Caco-2 (cell line): ENCODE measurements at regions of chr3 and their contacts with region 1.

Region 1: GRCh38 chr3:5057857-5058324 is 64.2 kb upstream of the ARL8B start:
- DNase-seq: peak; percentile 75 to 76
- H3K4me3 ChIP-seq: no peak overlapping the region
- H3K4me3 Mint-ChIP-seq: no peak overlapping the region
- H3K27ac Mint-ChIP-seq: no peak overlapping the region
- H3K4me1 ChIP-seq: no peaks in the 10 kb centered on the region
- H3K4me1 Mint-ChIP-seq: no peaks in the 10 kb centered on the region
- H3K27me3 ChIP-seq: no peaks in the 10 kb centered on the region
- H3K27me3 Mint-ChIP-seq: no peaks in the 10 kb centered on the region
- CTCF ChIP-seq: peak; percentile 68 to 69

Region 2: DNA sequence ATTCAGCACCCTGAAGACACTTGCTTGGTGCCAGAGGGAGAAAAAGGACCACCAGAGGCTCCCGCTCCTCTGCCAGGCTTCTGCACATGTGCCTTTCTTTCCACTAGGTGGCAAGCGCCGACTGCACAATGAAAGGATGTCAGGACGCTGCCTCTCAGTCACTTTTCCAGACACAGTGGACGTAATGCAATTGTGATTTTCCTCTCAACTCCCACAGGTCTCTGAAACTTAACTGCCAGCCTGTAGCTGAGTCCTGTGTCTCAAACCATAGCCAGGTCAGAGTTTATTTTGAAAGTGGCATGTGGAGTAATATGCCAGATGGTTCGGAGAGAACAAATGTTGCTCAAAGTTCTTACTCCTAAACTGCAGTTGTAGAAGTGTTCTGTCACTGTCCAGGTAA is 401.8 kb before region 1 on chr3:
- CTCF ChIA-PET with region 1: no interaction called
- POLR2A ChIA-PET with region 1: no interaction called
- intact Hi-C with region 1: loop called (anchors 1 kb)
- DNase-seq: peak; percentile 72 to 76
- H3K4me3 ChIP-seq: no peak overlapping the region
- H3K4me3 Mint-ChIP-seq: no peak overlapping the region
- H3K27ac Mint-ChIP-seq: no peak overlapping the region
- H3K4me1 ChIP-seq: no peaks in the 10 kb centered on the region
- H3K4me1 Mint-ChIP-seq: no peaks in the 10 kb centered on the region
- H3K27me3 ChIP-seq: no peaks in the 10 kb centered on the region
- H3K27me3 Mint-ChIP-seq: no peaks in the 10 kb centered on the region
- CTCF ChIP-seq: peak; percentile 87 to 96

Region 3: GRCh38 chr3:4786431-4786830 is 271.5 kb before region 1 on chr3:
- CTCF ChIA-PET with region 1: no interaction called
- POLR2A ChIA-PET with region 1: no interaction called
- intact Hi-C with region 1: loop called (anchors 10 kb)
- DNase-seq: no peak
- H3K4me3 ChIP-seq: no peak overlapping the region
- H3K4me3 Mint-ChIP-seq: no peak overlapping the region
- H3K27ac Mint-ChIP-seq: no peak overlapping the region
- H3K4me1 ChIP-seq: no peaks in the 10 kb centered on the region
- H3K4me1 Mint-ChIP-seq: no peaks in the 10 kb centered on the region
- H3K27me3 ChIP-seq: no peaks in the 10 kb centered on the region
- H3K27me3 Mint-ChIP-seq: no peaks in the 10 kb centered on the region
- CTCF ChIP-seq: no peak

Region 4: DNA sequence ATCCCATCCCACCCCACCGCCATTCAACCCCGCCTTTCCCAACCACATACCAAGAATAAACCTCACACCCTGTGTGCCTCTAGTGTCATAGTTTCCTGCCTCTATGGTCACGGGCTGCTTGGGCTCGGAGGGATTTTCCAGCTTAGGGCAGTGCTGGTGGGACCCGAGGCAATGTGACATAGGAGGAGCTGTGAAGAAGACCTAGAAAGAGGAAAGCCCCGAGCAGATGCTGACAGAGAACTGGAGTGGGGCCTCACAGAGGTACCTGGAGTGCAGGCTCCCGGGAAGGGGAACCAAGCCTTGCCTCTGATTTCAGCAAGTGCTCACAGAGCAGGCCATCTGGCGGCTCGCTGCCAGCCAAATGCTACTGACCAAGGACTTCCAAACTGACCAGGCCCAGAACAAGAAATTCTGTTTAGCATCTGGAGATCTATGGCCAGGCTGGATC is 51.1 kb before region 1 on chr3:
- CTCF ChIA-PET with region 1: no interaction called
- POLR2A ChIA-PET with region 1: no interaction called
- intact Hi-C with region 1: no loop called
- DNase-seq: no peak
- H3K4me3 ChIP-seq: no peak overlapping the region
- H3K4me3 Mint-ChIP-seq: no peak overlapping the region
- H3K27ac Mint-ChIP-seq: no peak overlapping the region
- H3K4me1 ChIP-seq: peaks cover 4% of the 10 kb centered on the region
- H3K4me1 Mint-ChIP-seq: peaks cover 7% of the 10 kb centered on the region
- H3K27me3 ChIP-seq: no peaks in the 10 kb centered on the region
- H3K27me3 Mint-ChIP-seq: no peaks in the 10 kb centered on the region
- CTCF ChIP-seq: no peak

Region 5: GRCh38 chr3:5035692-5036391 is 22.0 kb before region 1 on chr3:
- CTCF ChIA-PET with region 1: no interaction called
- POLR2A ChIA-PET with region 1: no interaction called
- intact Hi-C with region 1: no loop called
- DNase-seq: no peak
- H3K4me3 ChIP-seq: no peak overlapping the region
- H3K4me3 Mint-ChIP-seq: no peak overlapping the region
- H3K27ac Mint-ChIP-seq: no peak overlapping the region
- H3K4me1 ChIP-seq: no peaks in the 10 kb centered on the region
- H3K4me1 Mint-ChIP-seq: peaks cover 9% of the 10 kb centered on the region
- H3K27me3 ChIP-seq: no peaks in the 10 kb centered on the region
- H3K27me3 Mint-ChIP-seq: no peaks in the 10 kb centered on the region
- CTCF ChIP-seq: no peak

Region 6: DNA sequence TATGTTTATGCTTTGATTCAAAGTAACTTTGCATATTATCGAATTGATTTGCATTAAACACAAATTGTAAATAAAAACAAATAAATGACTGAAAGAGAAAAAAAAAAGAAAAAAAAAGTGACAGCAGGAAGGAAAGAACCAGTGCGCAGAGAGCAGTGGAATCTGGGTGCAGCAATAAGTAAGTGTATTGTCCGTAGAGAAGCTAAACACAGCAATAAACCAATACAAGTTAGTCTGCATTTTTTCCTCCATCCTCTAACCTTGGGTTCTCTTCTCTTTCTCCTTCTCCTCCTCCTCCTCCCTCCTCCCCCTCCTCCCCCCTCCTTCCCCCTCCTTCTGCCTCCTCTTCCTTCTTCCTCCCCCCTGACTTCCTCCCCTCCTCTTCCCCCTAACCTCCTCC is 45.9 kb after region 1 on chr3:
- CTCF ChIA-PET with region 1: no interaction called
- POLR2A ChIA-PET with region 1: no interaction called
- intact Hi-C with region 1: loop called (anchors 1 kb)
- DNase-seq: no peak
- H3K4me3 ChIP-seq: no peak overlapping the region
- H3K4me3 Mint-ChIP-seq: no peak overlapping the region
- H3K27ac Mint-ChIP-seq: no peak overlapping the region
- H3K4me1 ChIP-seq: peaks cover 4% of the 10 kb centered on the region
- H3K4me1 Mint-ChIP-seq: peaks cover 12% of the 10 kb centered on the region
- H3K27me3 ChIP-seq: no peaks in the 10 kb centered on the region
- H3K27me3 Mint-ChIP-seq: no peaks in the 10 kb centered on the region
- CTCF ChIP-seq: no peak

Region 7: DNA sequence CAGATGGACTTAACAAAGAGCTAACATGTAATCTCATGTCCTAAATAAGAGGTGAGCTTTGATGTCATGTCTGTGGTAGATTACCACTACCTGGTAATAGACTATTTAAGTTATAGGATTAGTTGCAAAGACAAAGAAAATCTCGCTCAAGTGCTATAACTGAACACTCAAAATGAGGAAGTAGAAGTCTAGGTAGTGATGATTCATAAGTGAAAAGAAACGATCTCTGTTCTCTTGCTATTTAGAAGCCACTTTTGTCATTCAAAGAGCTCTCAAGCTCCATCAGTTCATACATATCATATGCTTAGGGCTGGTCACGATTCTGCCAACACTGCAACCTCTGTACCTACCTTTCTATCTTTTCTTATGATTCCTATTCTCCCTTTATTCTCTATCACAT is 240.6 kb after region 1 on chr3:
- CTCF ChIA-PET with region 1: no interaction called
- POLR2A ChIA-PET with region 1: no interaction called
- intact Hi-C with region 1: no loop called
- DNase-seq: no peak
- H3K4me3 ChIP-seq: no peak overlapping the region
- H3K4me3 Mint-ChIP-seq: no peak overlapping the region
- H3K27ac Mint-ChIP-seq: peak overlapping the region; percentile 41
- H3K4me1 ChIP-seq: peaks cover 18% of the 10 kb centered on the region
- H3K4me1 Mint-ChIP-seq: peaks cover 25% of the 10 kb centered on the region
- H3K27me3 ChIP-seq: no peaks in the 10 kb centered on the region
- H3K27me3 Mint-ChIP-seq: no peaks in the 10 kb centered on the region
- CTCF ChIP-seq: no peak